Ascending aorta (tissue), 2 donors: ENCODE measurements at regions of chr12 and their contacts with region 1.

Region 1: GRCh38 chr12:125049093-125049458 is 16.2 kb upstream of the AACS start:
- DNase-seq: no peak
- H3K4me3 ChIP-seq: peak overlapping the region; percentile 56 to 69
- H3K27ac ChIP-seq: no peak overlapping the region
- H3K4me1 ChIP-seq: no peaks in the 10 kb centered on the region
- H3K27me3 ChIP-seq: no peaks in the 10 kb centered on the region
- CTCF ChIP-seq: no peak

Region 2: DNA sequence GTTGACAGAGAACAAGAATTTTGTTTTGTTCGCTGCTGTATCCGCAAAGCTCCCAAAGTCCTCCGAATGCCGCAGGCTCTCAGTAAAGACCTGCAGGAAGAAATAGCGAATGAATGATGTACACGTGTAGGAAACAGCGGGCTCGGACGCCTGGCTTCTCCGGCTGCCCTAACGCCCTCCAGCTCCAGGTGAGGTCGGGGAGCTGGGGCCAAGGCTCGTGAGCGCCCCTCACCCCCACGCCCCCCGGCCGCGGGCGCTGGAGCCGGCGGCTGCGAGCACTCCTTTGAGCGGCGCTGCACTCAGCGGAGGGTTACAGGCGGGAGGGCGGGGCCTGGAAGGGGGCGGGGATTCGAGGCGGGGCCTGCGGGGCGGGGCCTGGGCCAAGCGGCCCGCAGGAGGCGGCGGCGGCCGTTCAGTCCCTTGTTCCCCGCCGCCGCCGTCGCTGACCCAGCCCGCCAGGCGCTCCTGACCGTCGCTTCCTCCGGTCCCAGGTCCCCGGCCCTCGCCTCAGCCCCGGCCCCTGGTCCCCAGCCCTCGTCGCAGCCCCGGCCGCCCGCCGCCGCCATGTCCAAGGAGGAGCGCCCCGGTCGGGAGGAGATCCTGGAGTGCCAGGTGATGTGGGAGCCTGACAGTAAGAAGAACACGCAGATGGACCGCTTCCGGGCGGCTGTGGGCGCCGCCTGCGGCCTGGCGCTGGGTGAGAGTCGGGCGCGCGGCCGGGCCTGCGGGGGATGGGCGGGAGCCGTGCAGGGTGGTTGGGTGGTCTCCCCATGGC is 16.1 kb after region 1 on chr12 and contains the start of gene AACS:
- intact Hi-C with region 1: loop called (anchors 1 kb)
- DNase-seq: peak in 1 of 2 donors; percentile 78
- H3K4me3 ChIP-seq: peak within 1 kb of the TSS; percentile 67 to 99
- H3K27ac ChIP-seq: peak within 1 kb of the TSS; percentile 54 to 83
- H3K4me1 ChIP-seq: peaks cover 4 to 11% of the 10 kb centered on the region in 2 donors
- H3K27me3 ChIP-seq: no peaks in the 10 kb centered on the region
- CTCF ChIP-seq: no peak
- total RNA-seq, gene AACS: 7.0 TPM